ENCODE measurements at regions of chr16 and their contacts with region 1.

Region 1: GRCh38 chr16:22297114-22297878 is at the start of gene POLR3E:
- DNase-seq: peak; percentile 98
- H3K4me3 ChIP-seq: peak within 1 kb of the TSS; percentile 96 to 100 (median 97)
- H3K27ac ChIP-seq: peak within 1 kb of the TSS; percentile 95
- H3K4me1 ChIP-seq: peaks cover 15% of the 10 kb centered on the region
- H3K27me3 ChIP-seq: no peaks in the 10 kb centered on the region
- CTCF ChIP-seq: peak; percentile 76 to 93
- total RNA-seq, gene POLR3E: 22.7 to 41.1 TPM

Region 2: DNA sequence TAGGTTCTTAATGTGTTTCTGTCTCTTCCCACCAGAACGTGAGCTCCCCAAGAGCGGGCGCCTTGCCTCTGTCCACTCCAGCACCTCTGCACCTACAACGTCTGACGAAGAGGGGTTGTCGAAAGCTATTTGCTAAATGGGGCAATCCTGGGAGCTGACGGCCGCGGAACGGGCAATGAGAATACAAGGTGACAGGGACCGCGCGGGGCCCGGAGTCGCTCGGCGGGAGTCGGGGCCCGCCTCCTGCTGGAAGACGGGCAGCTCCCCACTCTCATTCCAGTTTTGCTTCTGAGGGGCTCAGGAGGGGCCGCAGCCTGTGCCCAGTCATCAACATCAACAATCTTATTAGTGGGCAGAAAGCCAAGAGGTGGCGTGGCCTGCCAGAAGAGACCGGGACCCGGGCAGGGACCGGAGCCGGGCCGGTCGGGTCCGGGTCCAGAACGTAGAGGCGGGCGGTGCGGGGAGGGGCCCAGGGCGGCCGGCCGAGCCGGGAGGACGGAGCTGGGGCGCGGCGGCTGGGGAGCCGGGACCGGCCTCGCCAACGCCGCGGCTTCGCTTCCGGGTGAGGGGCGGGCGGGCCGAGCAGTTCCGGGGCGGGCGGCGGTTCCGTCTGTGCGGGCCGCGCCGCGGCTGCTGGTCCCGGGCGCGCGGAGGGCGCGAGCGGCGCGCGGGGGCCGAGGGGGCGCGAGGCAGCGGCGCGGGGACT is 289.6 kb before region 1 on chr16 and contains the start of gene MOSMO:
- CTCF ChIA-PET with region 1: no interaction called
- dilution Hi-C with region 1: no loop called
- in situ Hi-C with region 1: no loop called
- intact Hi-C with region 1: loop called (anchors 10 kb)
- DNase-seq: peak; percentile 68
- H3K4me3 ChIP-seq: peak within 1 kb of the TSS; percentile 96 to 99 (median 97)
- H3K27ac ChIP-seq: peak within 1 kb of the TSS; percentile 83
- H3K4me1 ChIP-seq: peaks cover 30% of the 10 kb centered on the region
- H3K27me3 ChIP-seq: no peaks in the 10 kb centered on the region
- CTCF ChIP-seq: peak in 1 of 2 donors; percentile 14
- total RNA-seq, gene MOSMO: 19.0 to 34.8 TPM

Region 3: GRCh38 chr16:22117609-22118008 is 179.7 kb before region 1 on chr16:
- CTCF ChIA-PET with region 1: no interaction called
- dilution Hi-C with region 1: no loop called
- in situ Hi-C with region 1: no loop called
- intact Hi-C with region 1: loop called (anchors 10 kb)
- DNase-seq: peak; percentile 92
- H3K4me3 ChIP-seq: no peak overlapping the region
- H3K27ac ChIP-seq: no peak overlapping the region
- H3K4me1 ChIP-seq: peaks cover 3% of the 10 kb centered on the region
- H3K27me3 ChIP-seq: peaks cover 2% of the 10 kb centered on the region
- CTCF ChIP-seq: no peak

Region 4: DNA sequence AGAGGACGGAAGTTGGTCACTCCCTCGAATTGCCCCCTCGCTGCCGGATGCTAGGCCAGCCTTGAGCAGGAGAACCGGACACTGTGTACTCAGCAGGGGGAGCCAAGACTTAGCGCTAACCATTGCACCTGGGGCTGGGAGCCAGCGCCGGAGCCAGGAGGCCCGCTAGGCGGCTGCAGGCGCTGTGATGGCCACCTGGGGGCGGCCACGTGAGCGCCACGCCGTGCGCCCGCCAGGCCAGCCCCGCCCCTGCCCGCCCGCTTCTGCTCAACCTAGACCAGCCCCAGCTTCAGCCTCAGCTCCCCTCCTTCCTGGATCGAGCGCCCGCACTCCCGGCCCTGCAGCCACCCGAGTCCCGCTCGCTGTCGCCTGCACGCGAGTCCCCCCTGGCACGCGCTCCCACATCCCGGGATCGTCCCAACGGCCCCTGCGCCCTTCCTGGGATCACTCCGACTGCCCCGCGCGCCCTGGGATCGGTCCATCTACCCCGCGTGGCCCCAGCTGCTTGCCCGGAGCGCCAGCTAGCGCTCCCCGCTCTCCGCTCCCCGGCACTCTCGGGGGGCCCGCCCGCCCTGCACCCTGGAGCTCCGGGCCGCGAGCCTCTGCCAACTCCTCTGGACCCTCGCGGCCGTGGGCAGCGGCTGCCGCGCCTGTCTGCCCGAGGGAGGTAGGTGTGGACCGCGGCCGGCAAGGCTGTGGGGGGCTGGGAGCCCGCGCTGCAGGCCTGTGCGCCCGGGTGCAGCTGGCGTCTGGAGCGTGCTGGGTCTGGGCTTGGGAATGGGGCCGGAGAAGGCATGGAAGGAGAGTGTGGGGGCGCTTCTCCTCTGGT is 91.1 kb before region 1 on chr16 and contains the start of gene EEF2K:
- CTCF ChIA-PET with region 1: interaction called, 4 read pairs
- dilution Hi-C with region 1: no loop called
- in situ Hi-C with region 1: loop called in 1 of 2 experiments (anchors 5 kb)
- intact Hi-C with region 1: loop called (anchors 1 kb)
- DNase-seq: peak; percentile 94
- H3K4me3 ChIP-seq: peak within 1 kb of the TSS; percentile 88 to 99 (median 92)
- H3K27ac ChIP-seq: peak within 1 kb of the TSS; percentile 70
- H3K4me1 ChIP-seq: peaks cover 18% of the 10 kb centered on the region
- H3K27me3 ChIP-seq: no peaks in the 10 kb centered on the region
- CTCF ChIP-seq: peak; percentile 49 to 71
- total RNA-seq, gene EEF2K: 16.0 to 22.8 TPM

Region 5: DNA sequence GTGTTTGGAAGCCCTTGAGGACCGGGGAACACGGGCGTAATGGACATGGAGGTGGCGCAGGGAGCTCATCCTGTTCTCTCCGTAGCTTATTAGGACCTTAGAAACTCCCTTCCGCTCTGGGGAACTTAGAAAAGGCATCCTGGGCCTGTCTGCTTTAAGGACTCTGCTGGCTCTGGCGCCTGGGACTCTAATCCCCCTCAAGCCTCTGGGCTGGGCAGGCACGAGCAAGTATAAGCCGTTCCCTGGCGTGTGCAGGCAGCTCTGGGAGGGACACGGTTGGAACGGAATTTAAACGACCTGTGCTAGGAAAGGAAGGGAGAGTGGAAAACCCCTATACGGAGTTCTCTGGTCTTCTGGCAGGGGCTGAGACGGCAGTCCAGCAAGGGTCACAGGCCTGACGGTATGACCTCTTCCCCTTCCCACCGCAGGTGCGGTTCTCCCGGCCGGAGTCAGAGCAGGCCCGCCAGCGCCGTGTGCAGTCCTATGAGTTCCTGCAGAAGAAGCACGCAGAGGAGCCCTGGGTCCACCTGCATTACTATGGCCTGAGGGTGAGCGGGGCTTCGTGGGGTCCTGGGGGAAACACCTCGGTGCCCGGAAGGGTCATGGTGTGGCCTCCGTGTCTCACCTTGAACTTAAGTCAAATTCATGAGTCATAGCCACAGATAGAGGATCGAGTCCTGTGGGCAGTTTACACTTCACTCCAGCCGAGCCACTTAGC is 17.5 kb after region 1 on chr16:
- CTCF ChIA-PET with region 1: interaction called, 5 read pairs
- dilution Hi-C with region 1: no loop called
- in situ Hi-C with region 1: no loop called
- intact Hi-C with region 1: loop called (anchors 2 kb)
- DNase-seq: peak; percentile 88
- H3K4me3 ChIP-seq: peak overlapping the region in 2 of 3 experiments; percentile 5 to 30
- H3K27ac ChIP-seq: peak overlapping the region; percentile 42
- H3K4me1 ChIP-seq: peaks cover 22% of the 10 kb centered on the region
- H3K27me3 ChIP-seq: no peaks in the 10 kb centered on the region
- CTCF ChIP-seq: no peak

Region 6: DNA sequence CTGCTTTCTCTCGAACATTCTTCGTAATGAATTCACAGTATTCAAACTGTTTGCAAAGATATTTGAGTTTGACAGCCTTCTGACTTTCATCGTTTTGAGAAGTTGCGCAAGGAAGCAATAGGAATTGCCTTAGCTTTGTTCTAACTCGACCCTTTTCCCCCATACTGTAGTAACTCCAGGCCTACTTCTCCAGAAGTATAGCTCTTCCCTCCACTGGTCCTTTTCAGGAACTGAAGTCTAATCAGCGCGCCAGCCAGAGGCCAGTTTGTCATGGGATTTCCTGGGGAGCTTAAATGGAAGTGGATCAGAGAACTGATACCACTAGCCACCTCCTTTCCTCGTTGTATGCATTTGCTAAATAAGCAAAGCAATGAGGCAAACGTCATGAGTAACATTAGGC is 49.2 kb after region 1 on chr16:
- CTCF ChIA-PET with region 1: no interaction called
- dilution Hi-C with region 1: no loop called
- in situ Hi-C with region 1: no loop called
- intact Hi-C with region 1: loop called (anchors 5 kb)
- DNase-seq: no peak
- H3K4me3 ChIP-seq: no peak overlapping the region
- H3K27ac ChIP-seq: peak overlapping the region; percentile 96
- H3K4me1 ChIP-seq: peaks cover 38% of the 10 kb centered on the region
- H3K27me3 ChIP-seq: no peaks in the 10 kb centered on the region
- CTCF ChIP-seq: no peak

Region 7: DNA sequence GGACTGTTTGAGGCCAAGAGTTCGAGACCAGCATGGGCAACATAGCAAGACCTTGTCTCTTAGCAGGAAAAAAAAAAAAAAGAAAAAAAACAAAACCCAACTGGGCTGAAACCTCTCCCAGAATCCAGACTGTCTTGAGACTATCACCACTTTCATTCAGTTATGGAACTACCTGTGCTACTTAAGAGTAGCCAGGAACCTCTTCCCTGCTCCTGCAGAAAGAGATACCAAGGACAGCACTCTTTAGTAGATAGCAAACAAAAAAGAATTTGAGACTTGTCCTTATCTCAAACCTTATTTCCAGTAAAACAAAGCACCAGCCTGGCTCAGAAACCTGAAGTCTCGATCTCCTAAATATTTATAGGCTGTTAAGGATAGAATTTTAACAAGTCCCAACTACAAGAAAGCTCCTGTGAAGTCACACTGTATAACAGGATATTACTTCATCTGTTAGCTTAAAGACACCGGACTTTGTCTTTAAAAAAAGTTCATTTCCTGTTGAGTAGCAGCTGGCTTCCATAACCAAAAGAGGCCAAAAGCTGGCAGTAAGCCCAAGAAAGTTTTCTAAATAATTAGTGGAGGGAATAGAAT is 72.0 kb after region 1 on chr16:
- CTCF ChIA-PET with region 1: no interaction called
- dilution Hi-C with region 1: no loop called
- in situ Hi-C with region 1: no loop called
- intact Hi-C with region 1: no loop called
- DNase-seq: no peak
- H3K4me3 ChIP-seq: no peak overlapping the region
- H3K27ac ChIP-seq: peak overlapping the region; percentile 85
- H3K4me1 ChIP-seq: peaks cover 60% of the 10 kb centered on the region
- H3K27me3 ChIP-seq: no peaks in the 10 kb centered on the region
- CTCF ChIP-seq: no peak

Measured in mammary epithelial cell (primary cell).